ENCODE measurements at regions of chr13 and their contacts with region 1.

Region 1: DNA sequence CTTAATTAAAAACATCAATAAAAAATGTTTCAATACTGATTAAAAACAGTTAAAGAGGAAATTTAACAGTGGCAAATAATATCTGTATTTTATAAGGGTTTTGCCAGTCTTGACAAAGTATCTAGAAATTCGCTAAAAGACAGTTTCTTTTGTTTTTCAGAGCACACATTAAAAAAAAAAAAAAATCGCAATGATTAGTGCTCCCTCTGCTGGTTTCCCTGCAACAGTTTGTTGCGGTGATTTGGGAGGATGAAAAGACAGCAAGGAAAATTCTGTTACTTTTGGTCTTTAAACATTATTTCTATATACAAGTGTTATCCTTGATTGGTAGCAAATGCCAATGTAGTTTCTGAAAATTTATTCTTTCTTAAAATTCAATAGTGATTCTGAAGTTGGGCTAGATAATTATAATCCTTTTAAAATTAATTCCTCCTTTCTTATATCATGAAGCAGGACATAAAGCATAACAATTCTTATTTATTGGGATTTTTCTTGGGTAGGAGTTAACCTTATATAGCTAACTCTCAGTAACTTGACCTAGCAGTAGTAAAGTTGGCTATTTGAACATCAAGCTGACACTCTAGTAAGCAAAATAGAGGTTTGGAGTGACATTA is 23.1 kb upstream of the SPRY2 start:
- DNase-seq: no peak
- H3K4me3 Mint-ChIP-seq: no peak overlapping the region
- H3K27ac Mint-ChIP-seq: no peak overlapping the region
- H3K4me1 Mint-ChIP-seq: no peaks in the 10 kb centered on the region
- H3K27me3 Mint-ChIP-seq: peaks cover 2% of the 10 kb centered on the region

Region 2: GRCh38 chr13:79360095-79360494 is 1003.9 kb before region 1 on chr13:
- CTCF ChIA-PET with region 1: no interaction called
- intact Hi-C with region 1: no loop called
- DNase-seq: no peak
- H3K4me3 Mint-ChIP-seq: no peak overlapping the region
- H3K27ac Mint-ChIP-seq: no peak overlapping the region
- H3K4me1 Mint-ChIP-seq: peaks cover 44% of the 10 kb centered on the region
- H3K27me3 Mint-ChIP-seq: no peaks in the 10 kb centered on the region

Region 3: DNA sequence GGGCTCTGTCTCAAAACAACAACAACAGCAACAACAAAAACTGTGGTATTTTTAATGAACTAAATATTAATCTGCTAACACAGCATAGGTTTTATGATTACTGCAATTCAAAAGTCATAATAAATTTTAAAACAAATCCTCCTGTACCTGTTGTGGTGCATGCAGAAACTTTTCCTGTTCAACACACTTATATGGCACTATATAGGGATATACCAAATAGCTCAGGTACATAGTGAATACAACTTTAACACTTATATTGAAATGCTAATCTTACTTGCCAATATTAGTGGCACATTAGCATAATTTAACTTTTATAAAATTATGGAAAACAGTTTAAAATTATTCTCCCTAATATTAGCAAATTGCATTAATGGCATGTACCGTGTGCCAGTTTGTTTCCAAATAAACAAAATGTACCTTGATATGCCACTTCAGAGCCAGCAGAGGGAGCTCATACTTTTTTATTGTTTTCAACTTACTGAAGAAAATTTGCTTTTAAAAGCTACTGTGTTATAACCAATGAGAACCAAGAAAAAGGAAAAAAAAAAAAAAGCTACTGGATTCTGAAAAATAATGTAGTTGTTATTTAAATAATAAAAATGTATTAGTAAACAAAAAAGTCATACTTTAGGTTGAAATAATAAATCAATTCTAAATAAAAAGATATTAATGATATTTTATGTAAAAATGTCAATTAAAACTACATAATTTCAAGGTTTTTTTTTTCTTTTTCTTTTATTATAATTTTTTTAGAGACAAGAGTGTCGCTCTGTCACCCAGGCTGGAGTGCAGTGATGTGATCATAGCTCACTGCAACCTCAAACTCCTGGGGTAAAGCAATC is 940.0 kb before region 1 on chr13:
- CTCF ChIA-PET with region 1: no interaction called
- intact Hi-C with region 1: loop called (anchors 5 kb)
- DNase-seq: no peak
- H3K4me3 Mint-ChIP-seq: no peak overlapping the region
- H3K27ac Mint-ChIP-seq: no peak overlapping the region
- H3K4me1 Mint-ChIP-seq: peaks cover 3% of the 10 kb centered on the region
- H3K27me3 Mint-ChIP-seq: no peaks in the 10 kb centered on the region

Region 4: DNA sequence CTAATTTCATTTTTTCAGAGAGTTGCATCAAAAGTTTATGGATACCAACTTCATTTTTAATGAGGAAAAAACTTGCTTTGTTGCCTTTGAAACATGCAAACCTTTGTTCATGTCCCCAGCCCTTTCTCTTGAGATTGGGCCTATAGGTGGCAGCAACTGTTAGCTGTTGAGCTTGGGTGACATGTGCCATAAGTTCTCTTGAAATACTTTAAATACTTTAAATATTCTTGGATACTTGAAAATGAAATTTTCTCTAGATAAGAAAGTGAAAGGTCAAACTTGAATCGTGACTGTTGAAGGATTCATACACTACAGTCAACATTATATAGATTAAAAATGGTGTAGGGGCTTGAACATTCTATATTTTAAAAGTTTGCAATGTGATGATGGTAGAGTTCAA is 588.2 kb before region 1 on chr13:
- CTCF ChIA-PET with region 1: no interaction called
- intact Hi-C with region 1: loop called (anchors 5 kb)
- DNase-seq: peak; percentile 18
- H3K4me3 Mint-ChIP-seq: no peak overlapping the region
- H3K27ac Mint-ChIP-seq: no peak overlapping the region
- H3K4me1 Mint-ChIP-seq: peaks cover under 1% of the 10 kb centered on the region
- H3K27me3 Mint-ChIP-seq: peaks cover 2% of the 10 kb centered on the region

Region 5: GRCh38 chr13:80342471-80343380 is 21.3 kb before region 1 on chr13:
- CTCF ChIA-PET with region 1: interaction called, 13 read pairs
- intact Hi-C with region 1: loop called (anchors 1 kb)
- DNase-seq: peak; percentile 64
- H3K4me3 Mint-ChIP-seq: peak overlapping the region; percentile 57
- H3K27ac Mint-ChIP-seq: no peak overlapping the region
- H3K4me1 Mint-ChIP-seq: peaks cover 8% of the 10 kb centered on the region
- H3K27me3 Mint-ChIP-seq: peaks cover 48% of the 10 kb centered on the region

Region 6: GRCh38 chr13:81017513-81018152 is 653.6 kb after region 1 on chr13:
- CTCF ChIA-PET with region 1: no interaction called
- intact Hi-C with region 1: loop called (anchors 5 kb)
- DNase-seq: no peak
- H3K4me3 Mint-ChIP-seq: no peak overlapping the region
- H3K27ac Mint-ChIP-seq: no peak overlapping the region
- H3K4me1 Mint-ChIP-seq: no peaks in the 10 kb centered on the region
- H3K27me3 Mint-ChIP-seq: no peaks in the 10 kb centered on the region